Dorsolateral prefrontal cortex (tissue), 120 donors: ENCODE measurements at regions of chr15 and their contacts with region 1.

Region 1: DNA sequence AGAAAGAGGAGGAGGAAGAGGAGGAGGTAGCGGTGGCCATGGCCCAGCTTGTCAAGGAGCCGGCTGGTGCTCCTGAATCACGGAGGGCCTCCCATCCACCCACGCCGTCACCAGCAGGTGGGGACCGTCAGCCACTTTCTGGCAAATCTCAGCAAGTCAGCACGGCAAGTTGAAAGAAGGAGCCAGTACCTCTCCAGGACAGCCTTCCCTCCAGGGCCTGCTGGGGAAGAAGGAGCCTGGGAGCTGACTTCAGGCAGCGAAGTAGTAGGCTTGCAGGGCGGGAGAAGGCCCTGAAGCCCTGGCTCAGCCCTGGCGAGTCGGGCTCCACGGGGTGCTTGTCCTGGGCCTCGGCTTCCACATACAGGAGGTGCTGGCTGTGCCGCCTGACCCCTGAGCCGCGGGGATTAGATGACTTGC is 99.2 kb upstream of the TRPM1 start:
- DNase-seq: peak; percentile 48 to 88 (median 71)
- H3K4me3 ChIP-seq: no peak overlapping the region
- H3K27ac ChIP-seq: no peak overlapping the region
- H3K27me3 ChIP-seq: no peaks in the 10 kb centered on the region
- CTCF ChIP-seq: peak in 54 of 56 donors; percentile 14 to 71 (median 47)

Region 2: GRCh38 chr15:31145271-31145911 is 55.4 kb before region 1 on chr15:
- intact Hi-C with region 1: loop called in 1 of 2 experiments (anchors 5 kb)
- DNase-seq: no peak
- H3K4me3 ChIP-seq: no peak overlapping the region
- H3K27ac ChIP-seq: no peak overlapping the region
- H3K27me3 ChIP-seq: no peaks in the 10 kb centered on the region
- CTCF ChIP-seq: no peak